ENCODE measurements at regions of chr2 and their contacts with region 1.

Region 1: GRCh38 chr2:11688222-11689069 is 18.5 kb upstream of the NTSR2 start:
- DNase-seq: no peak
- H3K4me3 ChIP-seq: peak overlapping the region in 2 of 3 experiments; percentile 24 to 64
- H3K27ac ChIP-seq: no peak overlapping the region
- H3K4me1 ChIP-seq: peaks cover 10% of the 10 kb centered on the region
- H3K27me3 ChIP-seq: peaks cover 11% of the 10 kb centered on the region
- CTCF ChIP-seq: peak; percentile 84 to 88 (median 86)

Region 2: DNA sequence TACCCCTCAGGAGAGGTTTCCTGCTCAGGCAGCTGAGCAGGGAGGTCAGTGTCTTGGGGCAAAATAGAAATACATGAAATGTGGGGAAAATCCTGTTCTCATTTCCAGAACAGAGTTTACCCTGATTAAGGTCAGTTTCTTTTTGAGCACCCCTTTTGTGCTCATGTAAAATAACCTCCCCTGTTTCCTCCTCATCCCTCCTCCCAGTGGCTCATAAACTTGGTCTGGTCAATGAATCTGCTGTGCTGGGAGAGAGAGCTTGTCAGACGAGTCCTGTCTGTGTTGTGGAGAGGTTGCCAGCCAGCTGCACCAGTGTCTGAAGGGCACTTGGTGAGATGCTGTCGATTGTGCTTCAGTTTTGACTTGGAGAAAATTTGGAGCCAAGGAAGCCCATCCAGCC is 67.0 kb before region 1 on chr2:
- dilution Hi-C with region 1: no loop called
- DNase-seq: no peak
- H3K4me3 ChIP-seq: no peak overlapping the region
- H3K27ac ChIP-seq: no peak overlapping the region
- H3K4me1 ChIP-seq: no peaks in the 10 kb centered on the region
- H3K27me3 ChIP-seq: peaks cover 4% of the 10 kb centered on the region
- CTCF ChIP-seq: no peak

Region 3: DNA sequence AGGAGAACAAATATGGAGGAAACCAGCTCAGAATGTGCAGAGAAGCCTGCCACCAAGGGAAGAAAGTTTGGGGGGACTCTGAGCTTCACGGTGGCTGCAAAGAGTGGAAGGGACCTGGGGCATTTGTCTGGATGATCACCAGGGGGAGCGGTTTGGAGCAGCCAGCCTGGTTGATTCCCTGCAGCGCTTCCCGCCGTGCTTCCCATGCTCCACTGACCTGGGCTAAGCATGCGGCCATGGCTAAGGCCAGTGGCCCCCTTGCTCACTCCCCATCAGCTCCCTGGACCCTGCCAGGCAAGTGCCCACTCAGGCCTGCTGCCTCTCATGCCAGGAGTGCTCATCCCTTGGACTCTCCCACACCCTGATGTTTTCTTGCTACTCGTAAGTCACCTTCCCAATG is 45.5 kb before region 1 on chr2:
- dilution Hi-C with region 1: no loop called
- DNase-seq: no peak
- H3K4me3 ChIP-seq: no peak overlapping the region
- H3K27ac ChIP-seq: no peak overlapping the region
- H3K4me1 ChIP-seq: no peaks in the 10 kb centered on the region
- H3K27me3 ChIP-seq: peaks cover 9% of the 10 kb centered on the region
- CTCF ChIP-seq: peak in 2 of 3 experiments; percentile 9 to 11

Region 4: DNA sequence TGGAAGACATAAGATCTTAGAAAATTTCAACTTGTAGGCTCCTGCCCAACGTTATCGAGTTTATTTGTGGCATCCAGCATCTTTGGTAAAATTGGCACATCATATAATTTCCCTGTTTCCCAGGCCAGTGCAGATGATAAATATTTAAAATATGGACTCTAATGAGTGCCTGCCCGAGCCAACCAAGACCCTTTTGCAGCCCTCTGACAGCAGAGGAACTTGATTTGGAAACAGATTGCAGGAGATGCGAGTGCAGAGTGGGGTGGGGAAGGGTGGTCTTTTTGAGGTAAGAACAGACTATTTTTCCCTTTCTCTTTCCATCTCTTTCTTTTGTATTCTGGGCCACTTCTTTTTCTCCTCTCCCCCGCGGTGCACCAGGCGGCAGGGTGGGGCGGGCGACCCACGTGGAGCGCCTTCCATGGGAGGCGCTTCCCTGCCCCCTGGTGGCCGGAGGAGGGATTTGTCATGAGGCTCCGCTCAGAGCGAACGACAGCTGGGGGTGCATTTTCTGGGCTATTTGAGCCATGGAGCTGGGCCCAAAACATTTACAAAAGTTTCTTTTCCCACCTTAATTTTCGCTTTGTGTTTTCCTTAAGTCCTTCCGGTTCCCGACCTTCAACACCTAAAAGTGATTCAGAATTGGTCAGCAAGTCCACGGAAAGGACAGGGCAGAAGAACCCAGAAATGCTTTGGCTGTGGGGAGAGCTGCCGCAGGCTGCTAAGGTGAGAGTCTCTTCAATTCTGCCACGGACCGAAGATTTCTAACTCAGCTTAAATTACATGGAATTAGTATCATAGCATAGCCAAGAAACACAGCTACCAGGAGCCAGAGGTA is 90.7 kb after region 1 on chr2:
- dilution Hi-C with region 1: loop called (anchors 25 kb)
- DNase-seq: no peak
- H3K4me3 ChIP-seq: no peak overlapping the region
- H3K27ac ChIP-seq: no peak overlapping the region
- H3K4me1 ChIP-seq: peaks cover 3% of the 10 kb centered on the region
- H3K27me3 ChIP-seq: no peaks in the 10 kb centered on the region
- CTCF ChIP-seq: peak; percentile 78 to 95 (median 86)

Region 5: GRCh38 chr2:12141618-12142258 is 453.3 kb after region 1 on chr2:
- dilution Hi-C with region 1: no loop called
- DNase-seq: no peak
- H3K4me3 ChIP-seq: no peak overlapping the region
- H3K27ac ChIP-seq: no peak overlapping the region
- H3K4me1 ChIP-seq: no peaks in the 10 kb centered on the region
- H3K27me3 ChIP-seq: peaks cover 9% of the 10 kb centered on the region
- CTCF ChIP-seq: no peak